MCF 10A (cell line): ENCODE measurements at regions of chr2 and their contacts with region 1.

Region 1: DNA sequence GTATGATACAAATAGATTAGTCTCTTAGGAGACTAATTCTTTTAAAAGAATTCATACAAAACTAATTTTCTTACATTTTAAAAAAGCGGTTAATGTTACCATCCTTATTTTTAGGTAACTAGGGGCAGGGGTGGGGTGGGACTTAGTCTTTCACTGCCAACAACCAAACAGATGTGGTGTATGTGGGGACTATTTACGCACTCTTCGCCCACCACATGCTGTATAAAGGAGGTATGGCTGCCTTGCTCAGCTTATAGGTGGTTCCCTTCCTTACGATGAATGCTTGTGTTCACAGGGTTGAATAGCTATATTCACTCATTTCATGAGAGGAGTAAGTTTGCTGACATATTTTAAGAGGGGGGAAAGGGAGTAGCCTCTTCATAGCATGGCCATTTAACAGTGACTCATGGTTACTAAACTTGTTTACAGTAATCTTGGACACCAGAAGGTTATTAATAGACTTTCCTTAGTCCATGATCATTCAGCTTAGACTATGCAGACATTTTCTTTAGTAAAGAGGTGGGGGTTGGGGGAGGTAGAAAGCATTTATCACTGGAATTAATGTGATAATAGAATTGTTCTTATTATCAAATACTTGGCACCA is 61.8 kb downstream of the CAB39 start:
- DNase-seq: peak; percentile 75
- H3K4me3 Mint-ChIP-seq: peak overlapping the region; percentile 13
- H3K27ac Mint-ChIP-seq: peak overlapping the region; percentile 87
- H3K4me1 Mint-ChIP-seq: peaks cover 47% of the 10 kb centered on the region
- H3K27me3 Mint-ChIP-seq: no peaks in the 10 kb centered on the region
- CTCF ChIP-seq: no peak

Region 2: DNA sequence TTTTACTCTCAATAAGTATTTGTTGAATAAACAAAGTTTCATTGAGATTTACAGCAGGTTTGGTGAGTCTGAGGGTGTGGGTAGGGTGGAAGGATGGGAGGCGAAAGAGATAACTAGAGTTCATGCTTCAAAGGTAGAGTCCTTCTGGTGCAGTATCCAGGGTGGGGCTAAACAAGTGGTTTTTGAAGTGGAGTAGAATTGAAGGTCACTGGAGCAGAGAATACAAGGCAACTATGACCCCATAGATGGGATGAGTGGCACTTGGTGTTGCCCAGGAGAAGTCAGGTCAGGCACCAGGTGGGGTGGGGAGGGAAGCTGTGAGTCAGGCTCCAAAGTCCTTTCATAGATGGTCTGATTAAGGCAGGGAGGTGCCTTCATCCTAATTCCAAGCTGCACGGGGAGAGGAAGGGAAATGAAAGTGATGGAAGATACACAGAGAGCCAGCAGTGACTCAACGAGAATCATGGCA is 68.4 kb before region 1 on chr2:
- CTCF ChIA-PET with region 1: no interaction called
- POLR2A ChIA-PET with region 1: no interaction called
- intact Hi-C with region 1: no loop called
- DNase-seq: no peak
- H3K4me3 Mint-ChIP-seq: no peak overlapping the region
- H3K27ac Mint-ChIP-seq: peak overlapping the region; percentile 3
- H3K4me1 Mint-ChIP-seq: peaks cover 5% of the 10 kb centered on the region
- H3K27me3 Mint-ChIP-seq: no peaks in the 10 kb centered on the region
- CTCF ChIP-seq: no peak

Region 3: DNA sequence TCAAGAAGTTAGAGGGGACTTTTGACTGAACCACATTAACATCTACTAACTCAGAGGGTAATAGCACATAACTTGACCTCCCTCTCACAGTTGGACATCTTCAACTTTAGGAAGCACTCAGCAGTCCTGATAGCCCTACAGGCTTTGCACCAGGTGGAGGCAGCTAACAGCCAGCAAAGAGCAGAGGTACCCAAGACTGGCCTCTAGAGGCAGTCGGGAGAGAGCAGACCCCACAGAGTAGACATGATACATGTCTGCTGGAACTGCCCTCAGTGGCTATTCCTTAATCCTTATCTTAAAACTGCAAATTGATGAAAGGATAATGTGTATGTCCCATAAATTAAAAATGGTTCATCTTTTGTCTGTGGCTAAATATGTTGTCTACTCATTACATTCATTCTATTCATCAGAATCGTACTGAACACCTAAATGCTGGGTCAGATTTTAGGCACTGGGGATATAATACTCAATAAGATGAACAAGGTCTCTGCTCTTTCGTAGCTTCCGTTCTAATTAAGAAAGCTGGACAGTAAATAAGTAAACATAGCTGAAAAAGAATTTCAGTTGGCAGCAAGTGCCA is 12.0 kb before region 1 on chr2:
- CTCF ChIA-PET with region 1: interaction called, 6 read pairs
- POLR2A ChIA-PET with region 1: interaction called, 11 read pairs
- intact Hi-C with region 1: no loop called
- DNase-seq: peak; percentile 65
- H3K4me3 Mint-ChIP-seq: no peak overlapping the region
- H3K27ac Mint-ChIP-seq: no peak overlapping the region
- H3K4me1 Mint-ChIP-seq: peaks cover 25% of the 10 kb centered on the region
- H3K27me3 Mint-ChIP-seq: no peaks in the 10 kb centered on the region
- CTCF ChIP-seq: peak; percentile 48